Psoas muscle (tissue), 8 donors: ENCODE measurements at regions of chr1 and their contacts with region 1.

Region 1: GRCh38 chr1:159469921-159470533 is 30.5 kb downstream of the OR10J1 start:
- DNase-seq: no peak
- ATAC-seq: no peak
- H3K4me3 ChIP-seq: no peak overlapping the region
- H3K27ac ChIP-seq: no peak overlapping the region
- H3K4me1 ChIP-seq: no peaks in the 10 kb centered on the region
- H3K27me3 ChIP-seq: no peaks in the 10 kb centered on the region
- CTCF ChIP-seq: no peak

Region 2: DNA sequence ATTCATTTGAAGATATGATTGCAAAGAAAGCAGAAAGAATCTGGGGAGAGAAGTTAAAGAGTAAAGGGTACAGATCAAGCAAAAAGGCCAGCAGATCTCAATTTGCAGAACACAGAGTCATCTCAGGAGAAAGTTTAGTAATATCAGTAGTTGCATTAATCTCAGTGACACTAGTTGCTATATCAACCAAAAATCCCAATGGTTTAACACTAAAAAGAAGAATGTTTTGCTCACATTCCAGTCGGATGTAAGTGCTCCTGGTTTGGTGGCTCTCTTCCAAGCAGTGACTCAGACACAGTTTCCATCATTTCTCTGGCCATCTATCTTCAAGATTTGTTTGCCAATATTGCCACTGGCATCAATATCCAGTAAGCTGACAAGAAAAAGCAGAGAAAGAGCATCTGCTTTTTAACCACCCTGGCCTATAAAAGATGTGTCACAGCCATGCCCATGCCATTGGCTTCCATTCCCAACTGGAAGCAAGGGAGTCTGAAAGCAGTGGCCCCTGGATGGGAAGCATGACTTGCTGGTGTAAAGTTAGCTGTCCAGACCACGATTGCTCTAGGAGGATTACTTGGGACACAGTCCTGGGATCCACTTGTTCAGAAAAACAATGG is 347.9 kb before region 1 on chr1:
- intact Hi-C with region 1: loop called in 1 of 2 experiments (anchors 5 kb)
- DNase-seq: no peak
- ATAC-seq: no peak
- H3K4me3 ChIP-seq: no peak overlapping the region
- H3K27ac ChIP-seq: no peak overlapping the region
- H3K4me1 ChIP-seq: no peaks in the 10 kb centered on the region
- H3K27me3 ChIP-seq: no peaks in the 10 kb centered on the region
- CTCF ChIP-seq: no peak

Region 3: GRCh38 chr1:159430985-159431384 is 39.0 kb before region 1 on chr1:
- intact Hi-C with region 1: no loop called
- DNase-seq: no peak
- ATAC-seq: no peak
- H3K4me3 ChIP-seq: no peak overlapping the region
- H3K27ac ChIP-seq: no peak overlapping the region
- H3K4me1 ChIP-seq: no peaks in the 10 kb centered on the region
- H3K27me3 ChIP-seq: no peaks in the 10 kb centered on the region
- CTCF ChIP-seq: no peak

Region 4: GRCh38 chr1:159669338-159669737 is 199.3 kb after region 1 on chr1:
- intact Hi-C with region 1: no loop called
- DNase-seq: no peak
- ATAC-seq: no peak
- H3K4me3 ChIP-seq: no peak overlapping the region
- H3K27ac ChIP-seq: no peak overlapping the region
- H3K4me1 ChIP-seq: no peaks in the 10 kb centered on the region
- H3K27me3 ChIP-seq: peaks cover 0 to 2% (median 0%) of the 10 kb centered on the region in 3 donors
- CTCF ChIP-seq: no peak